GM10248 (cell line): ENCODE measurements at regions of chr3 and their contacts with region 1.

Region 1: GRCh38 chr3:115092220-115092791 is 54.8 kb downstream of the ZBTB20 start:
- DNase-seq: peak; percentile 17
- CTCF ChIP-seq: peak; percentile 80

Region 2: GRCh38 chr3:115169808-115170207 is 77.5 kb after region 1 on chr3:
- CTCF ChIA-PET with region 1: interaction called, 36 read pairs
- POLR2A ChIA-PET with region 1: no interaction called
- DNase-seq: no peak
- CTCF ChIP-seq: no peak

Region 3: DNA sequence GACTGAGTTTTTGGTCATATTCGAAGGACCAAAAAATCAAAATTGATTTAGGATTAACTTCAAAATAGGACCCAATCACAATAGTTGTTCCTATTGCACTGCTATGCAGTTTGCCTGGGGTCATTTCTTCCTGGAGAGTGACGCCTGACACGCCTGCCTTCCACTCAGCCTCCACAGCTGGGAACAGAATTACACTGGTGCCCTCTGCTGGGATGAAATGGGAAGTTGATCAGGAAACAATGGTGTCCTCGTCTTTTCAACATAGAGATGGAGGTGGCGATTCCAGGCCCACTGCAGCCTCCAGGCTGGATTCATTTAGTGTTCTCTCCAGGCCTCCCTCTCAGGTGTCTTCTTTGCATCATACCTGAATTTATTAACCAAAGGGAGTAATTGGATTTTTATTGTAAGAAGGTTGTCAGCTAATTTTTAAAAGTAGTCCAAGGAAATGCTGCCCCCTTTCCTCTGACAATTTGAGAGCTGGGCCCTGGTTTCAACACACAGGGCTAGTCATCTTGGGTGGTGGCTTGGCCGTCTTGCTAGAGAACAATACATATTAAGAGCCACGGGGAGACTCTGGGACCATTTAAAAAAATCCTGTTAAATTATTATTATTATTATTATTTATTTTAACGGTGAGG is 600.7 kb after region 1 on chr3:
- CTCF ChIA-PET with region 1: interaction called, 20 read pairs
- POLR2A ChIA-PET with region 1: no interaction called
- DNase-seq: peak; percentile 65
- CTCF ChIP-seq: peak; percentile 77